Naive thymus-derived CD8-positive, alpha-beta T cell (primary cell): ENCODE measurements at regions of chr11 and their contacts with region 1.

Region 1: DNA sequence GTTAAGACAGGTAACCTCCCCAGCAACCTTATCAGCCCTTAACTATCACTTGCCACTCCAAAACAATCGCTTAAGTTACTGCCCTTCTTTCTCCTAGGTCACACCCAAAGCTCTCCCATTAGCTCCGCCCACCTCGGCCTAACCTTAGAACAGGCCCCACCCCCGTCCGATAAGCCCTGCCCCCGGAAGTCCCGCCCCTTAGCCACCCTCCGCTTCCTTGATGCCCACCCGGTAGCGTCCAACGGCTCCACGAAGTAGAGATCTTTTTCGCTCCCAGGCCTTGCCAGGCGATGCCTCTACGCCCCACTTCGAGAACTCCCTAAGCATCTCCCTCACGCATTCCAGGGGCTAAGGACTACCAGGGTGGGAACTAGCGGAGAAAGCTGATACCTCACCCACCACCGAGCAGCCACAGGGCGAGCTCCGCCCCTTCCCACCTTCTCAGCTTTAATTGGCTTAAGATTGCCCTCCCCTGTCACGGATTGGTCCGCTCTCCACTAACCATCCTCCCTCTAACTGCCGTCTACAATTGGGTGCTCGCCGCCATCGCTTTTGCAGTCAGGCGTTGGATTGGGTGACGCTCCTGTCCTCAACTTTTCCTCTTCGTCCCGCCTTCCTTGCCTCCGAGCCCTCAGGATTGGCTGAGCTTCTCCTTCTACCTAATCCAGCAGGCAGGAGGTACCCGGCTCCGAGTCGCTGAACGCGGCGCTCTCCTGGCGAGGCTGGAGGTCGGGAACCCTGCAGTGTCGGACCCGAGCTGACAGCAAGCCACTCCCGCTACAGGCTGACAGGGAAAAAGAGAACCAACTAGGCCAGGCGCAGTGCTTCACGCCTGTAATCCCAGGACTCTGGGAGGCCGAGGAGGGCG is at the start of gene ZBTB3:
- DNase-seq: peak; percentile 93 to 100 (median 96)
- ATAC-seq: peak; percentile 95 to 96
- H3K4me3 Mint-ChIP-seq: peak within 1 kb of the TSS; percentile 91 to 100 (median 97)
- H3K27ac Mint-ChIP-seq: peak within 1 kb of the TSS; percentile 88 to 100 (median 99)
- H3K4me1 Mint-ChIP-seq: peaks cover 8 to 43% (median 28%) of the 10 kb centered on the region in 4 donors
- H3K27me3 Mint-ChIP-seq: no peaks in the 10 kb centered on the region
- polyA plus RNA-seq, gene ZBTB3: 2.1 to 6.7 (median 3.6) TPM

Region 2: GRCh38 chr11:61718621-61719302 is 1035.2 kb before region 1 on chr11:
- POLR2A ChIA-PET with region 1: no interaction called
- DNase-seq: no peak
- ATAC-seq: no peak
- H3K4me3 Mint-ChIP-seq: no peak overlapping the region
- H3K27ac Mint-ChIP-seq: no peak overlapping the region
- H3K4me1 Mint-ChIP-seq: peaks cover 0 to 2% (median under 1%) of the 10 kb centered on the region in 4 donors
- H3K27me3 Mint-ChIP-seq: no peaks in the 10 kb centered on the region

Region 3: DNA sequence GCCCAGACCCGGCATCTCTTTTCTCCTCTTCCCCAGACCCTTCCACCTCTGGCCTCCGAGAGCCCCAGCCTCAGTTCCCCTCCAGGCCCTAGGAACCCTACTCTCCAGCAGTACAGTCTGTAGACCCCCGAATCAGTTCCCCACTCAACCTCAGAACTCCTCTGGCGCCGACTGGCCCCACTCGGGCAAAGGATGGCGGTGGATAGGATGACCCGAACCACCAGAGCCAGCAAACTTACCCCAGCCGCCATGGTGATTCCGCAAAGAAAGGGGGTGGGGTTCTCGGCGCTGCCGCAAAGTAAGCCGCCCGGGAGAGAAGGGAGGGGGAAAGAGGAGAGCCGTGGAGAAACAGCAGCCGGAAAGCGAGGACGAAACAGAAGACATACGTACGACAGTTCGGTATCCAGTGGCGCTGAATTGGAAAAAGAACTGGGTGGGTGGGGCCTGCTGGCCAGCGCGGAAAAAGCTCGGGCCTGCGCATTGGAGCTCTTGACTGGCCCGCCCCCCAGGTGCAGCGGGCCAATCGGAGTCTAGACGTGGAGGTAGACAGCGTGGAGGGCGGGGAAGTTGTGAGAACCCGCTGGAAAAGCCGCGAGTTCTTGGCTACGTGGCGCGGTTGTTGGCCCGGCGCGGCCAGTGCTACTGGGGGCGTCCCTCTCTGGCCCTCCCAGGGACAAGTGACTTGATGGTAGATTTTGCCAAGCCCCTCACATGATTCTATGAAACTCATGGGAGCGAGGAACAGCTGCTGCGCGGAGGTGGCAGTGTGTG is 180.2 kb before region 1 on chr11 and contains the start of gene EEF1G:
- POLR2A ChIA-PET with region 1: interaction called, 10 read pairs
- DNase-seq: peak; percentile 94 to 100 (median 98)
- ATAC-seq: peak; percentile 91 to 92
- H3K4me3 Mint-ChIP-seq: peak within 1 kb of the TSS; percentile 93 to 99 (median 97)
- H3K27ac Mint-ChIP-seq: peak within 1 kb of the TSS; percentile 90 to 99 (median 98)
- H3K4me1 Mint-ChIP-seq: peaks cover 41 to 59% (median 53%) of the 10 kb centered on the region in 4 donors
- H3K27me3 Mint-ChIP-seq: no peaks in the 10 kb centered on the region
- polyA plus RNA-seq, gene EEF1G: 1,637 to 2,152 (median 1,960) TPM

Region 4: GRCh38 chr11:62689421-62690183 is 64.4 kb before region 1 on chr11 and contains the start of gene LRRN4CL:
- POLR2A ChIA-PET with region 1: no interaction called
- DNase-seq: no peak
- ATAC-seq: no peak
- H3K4me3 Mint-ChIP-seq: peak within 1 kb of the TSS in 1 of 10 donors; percentile 29
- H3K27ac Mint-ChIP-seq: peak within 1 kb of the TSS in 3 of 10 donors; percentile 12 to 55 (median 24)
- H3K4me1 Mint-ChIP-seq: peaks cover under 1 to 3% (median 2%) of the 10 kb centered on the region in 4 donors
- H3K27me3 Mint-ChIP-seq: peaks cover 0 to 18% (median 4%) of the 10 kb centered on the region in 5 donors
- polyA plus RNA-seq, gene LRRN4CL: not detected

Region 5: GRCh38 chr11:62771144-62772021 is 17.4 kb after region 1 on chr11 and contains the start of gene TAF6L:
- POLR2A ChIA-PET with region 1: interaction called, 75 read pairs
- DNase-seq: peak; percentile 78 to 93 (median 83)
- ATAC-seq: peak; percentile 82 to 94
- H3K4me3 Mint-ChIP-seq: peak within 1 kb of the TSS; percentile 84 to 99 (median 96)
- H3K27ac Mint-ChIP-seq: peak within 1 kb of the TSS; percentile 89 to 98 (median 96)
- H3K4me1 Mint-ChIP-seq: peaks cover 15 to 34% (median 32%) of the 10 kb centered on the region in 4 donors
- H3K27me3 Mint-ChIP-seq: no peaks in the 10 kb centered on the region
- polyA plus RNA-seq, gene TAF6L: 8.7 to 10.8 (median 8.9) TPM

Region 6: GRCh38 chr11:62831520-62832335 is 77.8 kb after region 1 on chr11 and contains the start of gene STX5:
- POLR2A ChIA-PET with region 1: interaction called, 22 read pairs
- DNase-seq: peak; percentile 99 to 100 (median 100)
- ATAC-seq: peak; percentile 89 to 90
- H3K4me3 Mint-ChIP-seq: peak within 1 kb of the TSS; percentile 93 to 99 (median 98)
- H3K27ac Mint-ChIP-seq: peak within 1 kb of the TSS; percentile 91 to 100 (median 100)
- H3K4me1 Mint-ChIP-seq: peaks cover 25 to 56% (median 48%) of the 10 kb centered on the region in 4 donors
- H3K27me3 Mint-ChIP-seq: no peaks in the 10 kb centered on the region
- polyA plus RNA-seq, gene STX5: 25.4 to 30.4 (median 26.2) TPM

Region 7: DNA sequence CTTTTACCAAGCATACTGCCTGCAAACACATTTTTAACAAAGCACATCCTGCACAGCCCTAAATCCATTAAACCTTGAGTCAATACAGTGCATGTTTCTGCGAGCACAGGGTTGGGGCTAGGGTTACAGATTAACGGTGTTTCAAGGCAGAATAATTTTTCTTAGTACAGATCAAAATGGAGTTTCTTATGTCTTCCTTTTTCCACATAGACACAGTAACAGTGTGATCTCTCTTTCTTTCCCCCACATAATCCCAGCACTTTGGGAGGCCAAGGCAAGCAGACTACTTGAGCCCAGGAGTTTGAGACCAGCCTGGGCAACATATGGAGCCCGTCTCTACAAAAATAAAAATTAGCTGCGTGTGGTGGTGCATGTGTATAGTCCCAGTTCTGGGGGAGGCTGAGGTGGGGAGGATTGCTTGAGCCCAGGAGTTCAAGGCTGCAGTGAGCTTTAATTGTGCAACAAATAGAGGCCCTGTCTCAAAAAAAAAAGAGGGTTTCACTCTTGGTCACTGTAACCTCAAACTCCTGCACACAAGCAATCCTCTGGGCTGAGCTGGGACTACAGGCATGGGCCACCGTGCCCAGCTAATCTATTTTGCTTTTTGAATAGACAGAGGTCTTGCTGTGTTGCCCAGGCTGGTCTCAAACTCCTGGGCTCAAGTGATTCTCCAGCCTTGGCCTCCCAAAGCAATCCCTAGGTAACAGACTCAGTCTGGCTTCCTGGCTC is 107.0 kb after region 1 on chr11:
- POLR2A ChIA-PET with region 1: interaction called, 30 read pairs
- DNase-seq: no peak
- ATAC-seq: no peak
- H3K4me3 Mint-ChIP-seq: no peak overlapping the region
- H3K27ac Mint-ChIP-seq: peak overlapping the region in 1 of 10 donors; percentile 34
- H3K4me1 Mint-ChIP-seq: peaks cover 8 to 26% (median 14%) of the 10 kb centered on the region in 4 donors
- H3K27me3 Mint-ChIP-seq: peaks cover 0 to under 1% (median 0%) of the 10 kb centered on the region in 5 donors